ENCODE measurements at regions of chr14 and their contacts with region 1.

Region 1: GRCh38 chr14:24215495-24216344 is at the start of gene MDP1:
- DNase-seq: peak; percentile 81 to 96
- ATAC-seq: peak; percentile 74 to 86 (median 74)
- H3K4me3 ChIP-seq: peak within 1 kb of the TSS; percentile 63
- H3K4me3 Mint-ChIP-seq: peak within 1 kb of the TSS; percentile 90
- H3K27ac ChIP-seq: peak within 1 kb of the TSS; percentile 82
- H3K27ac Mint-ChIP-seq: peak within 1 kb of the TSS; percentile 98 to 99
- H3K4me1 ChIP-seq: peaks cover 30% of the 10 kb centered on the region
- H3K4me1 Mint-ChIP-seq: peaks cover 48 to 50% of the 10 kb centered on the region in 2 donors
- H3K27me3 ChIP-seq: no peaks in the 10 kb centered on the region
- H3K27me3 Mint-ChIP-seq: no peaks in the 10 kb centered on the region
- CTCF ChIP-seq: peak; percentile 61
- total RNA-seq, gene MDP1: 4.0 to 6.1 (median 5.5) TPM

Region 2: DNA sequence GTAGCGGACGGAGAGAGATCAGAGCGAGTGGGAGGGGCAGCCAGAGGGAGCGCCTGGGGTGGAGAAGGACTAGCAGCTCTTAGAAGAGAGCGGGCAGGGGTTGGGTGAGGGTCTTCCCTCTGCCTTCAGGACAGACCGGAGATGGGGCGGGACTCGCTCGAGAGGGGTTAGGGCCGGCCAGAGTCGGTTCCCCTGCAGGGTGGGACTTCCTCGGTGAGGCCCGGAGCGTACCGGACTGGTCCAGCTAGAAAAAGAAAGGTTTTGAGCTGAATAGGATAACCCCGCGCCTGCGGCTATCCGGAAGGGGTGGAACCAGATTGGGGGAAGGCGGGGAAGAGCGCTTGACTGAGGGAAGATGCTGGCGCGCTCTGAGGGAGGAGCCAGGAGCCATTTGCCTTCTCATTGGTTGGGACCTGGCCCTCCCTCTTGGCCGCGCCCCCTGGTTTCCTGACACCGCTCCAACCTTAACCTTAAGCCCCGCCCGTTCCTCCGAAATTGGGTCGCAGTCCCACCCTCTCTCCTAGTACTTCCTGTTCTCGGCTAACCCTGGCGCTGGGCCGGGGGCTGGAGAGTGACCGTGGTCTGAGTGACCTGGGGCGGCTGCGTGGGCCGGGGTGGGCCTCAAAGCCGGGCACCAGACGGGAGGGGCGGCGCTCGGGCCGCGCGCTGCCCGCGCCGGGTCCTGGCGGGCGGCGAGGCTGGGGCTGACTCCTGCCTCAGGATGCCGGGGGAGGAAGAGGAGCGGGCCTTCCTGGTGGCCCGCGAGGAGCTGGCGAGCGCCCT is 68.6 kb before region 1 on chr14 and contains the start of gene RNF31:
- intact Hi-C with region 1: loop called (anchors 2 kb)
- DNase-seq: peak; percentile 95 to 99
- ATAC-seq: peak; percentile 86 to 95 (median 86)
- H3K4me3 ChIP-seq: peak within 1 kb of the TSS; percentile 91
- H3K4me3 Mint-ChIP-seq: peak within 1 kb of the TSS; percentile 97
- H3K27ac ChIP-seq: peak within 1 kb of the TSS; percentile 88
- H3K27ac Mint-ChIP-seq: peak within 1 kb of the TSS; percentile 94
- H3K4me1 ChIP-seq: peaks cover 29% of the 10 kb centered on the region
- H3K4me1 Mint-ChIP-seq: peaks cover 53 to 73% of the 10 kb centered on the region in 2 donors
- H3K27me3 ChIP-seq: no peaks in the 10 kb centered on the region
- H3K27me3 Mint-ChIP-seq: no peaks in the 10 kb centered on the region
- CTCF ChIP-seq: no peak
- total RNA-seq, gene RNF31: 96.9 to 134 (median 125) TPM

Region 3: GRCh38 chr14:24195191-24196070 is 20.3 kb before region 1 on chr14 and contains the start of gene TM9SF1:
- intact Hi-C with region 1: loop called (anchors 1 kb)
- DNase-seq: peak; percentile 92 to 95
- ATAC-seq: peak; percentile 82 to 92 (median 84)
- H3K4me3 ChIP-seq: peak within 1 kb of the TSS; percentile 92
- H3K4me3 Mint-ChIP-seq: peak within 1 kb of the TSS; percentile 85
- H3K27ac ChIP-seq: peak within 1 kb of the TSS; percentile 99
- H3K27ac Mint-ChIP-seq: peak within 1 kb of the TSS; percentile 91 to 96
- H3K4me1 ChIP-seq: peaks cover 30% of the 10 kb centered on the region
- H3K4me1 Mint-ChIP-seq: peaks cover 42 to 52% of the 10 kb centered on the region in 2 donors
- H3K27me3 ChIP-seq: no peaks in the 10 kb centered on the region
- H3K27me3 Mint-ChIP-seq: no peaks in the 10 kb centered on the region
- CTCF ChIP-seq: no peak
- total RNA-seq, gene TM9SF1: 15.2 to 32.1 (median 28.7) TPM

Region 4: GRCh38 chr14:24241829-24242443 is 26.2 kb after region 1 on chr14:
- intact Hi-C with region 1: loop called (anchors 1 kb)
- DNase-seq: peak; percentile 92 to 97
- ATAC-seq: peak; percentile 79 to 92 (median 79)
- H3K4me3 ChIP-seq: peak overlapping the region; percentile 74
- H3K4me3 Mint-ChIP-seq: peak overlapping the region; percentile 98
- H3K27ac ChIP-seq: peak overlapping the region; percentile 97
- H3K27ac Mint-ChIP-seq: peak overlapping the region; percentile 100
- H3K4me1 ChIP-seq: peaks cover 41% of the 10 kb centered on the region
- H3K4me1 Mint-ChIP-seq: peaks cover 61 to 71% of the 10 kb centered on the region in 2 donors
- H3K27me3 ChIP-seq: no peaks in the 10 kb centered on the region
- H3K27me3 Mint-ChIP-seq: no peaks in the 10 kb centered on the region
- CTCF ChIP-seq: peak; percentile 39

Region 5: DNA sequence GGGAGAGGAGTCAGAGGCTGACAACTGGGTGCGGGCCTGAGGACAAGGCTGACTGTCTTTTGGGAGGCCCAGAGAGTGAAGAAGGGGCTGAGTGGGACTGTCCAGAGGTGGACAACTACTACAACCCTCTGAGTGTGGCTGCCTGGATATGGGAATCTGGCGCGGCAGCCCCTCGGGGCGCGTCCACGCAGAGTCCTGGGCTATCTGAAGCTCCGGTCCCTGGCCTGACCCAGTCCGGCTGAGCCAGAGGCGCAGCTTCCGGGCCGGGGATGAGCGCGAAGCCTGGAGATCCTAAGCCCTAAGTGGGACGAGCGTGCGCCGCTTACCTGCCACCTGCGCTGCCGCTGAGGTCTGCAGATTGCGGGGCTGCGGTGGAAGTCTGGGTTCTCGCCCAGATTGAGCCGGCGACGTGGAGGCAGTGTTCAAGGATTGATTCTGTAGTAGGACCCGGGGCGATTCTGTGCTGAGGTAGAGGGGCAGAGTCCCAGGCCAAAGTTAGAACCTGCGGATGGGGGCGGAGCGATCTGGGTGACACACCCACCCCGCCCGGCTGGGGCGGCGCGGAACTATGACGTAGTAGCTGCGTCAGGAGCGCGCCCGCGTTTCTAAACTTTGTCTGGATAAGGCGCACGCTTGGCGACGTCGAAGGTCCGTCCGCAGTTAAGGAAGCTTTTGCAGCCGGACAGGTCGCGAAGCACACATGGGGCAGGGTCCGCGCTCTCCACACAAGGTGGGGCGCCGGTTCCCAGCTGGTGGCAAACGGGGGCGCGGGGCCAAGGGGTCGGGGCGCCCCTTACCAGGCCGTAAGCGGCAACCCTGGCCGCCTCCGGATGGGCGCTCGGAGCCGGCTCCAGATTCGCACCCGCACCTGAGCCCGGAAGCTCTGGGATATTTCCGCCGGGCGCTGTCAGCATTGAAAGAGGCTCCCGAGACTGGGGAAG is 83.8 kb after region 1 on chr14 and contains the starts of genes DHRS1 and NOP9:
- intact Hi-C with region 1: loop called (anchors 2 kb)
- DNase-seq: peak; percentile 95 to 96
- ATAC-seq: peak; percentile 79 to 89 (median 82)
- H3K4me3 ChIP-seq: peak within 1 kb of the TSS; percentile 51
- H3K4me3 Mint-ChIP-seq: peak within 1 kb of the TSS; percentile 91
- H3K27ac ChIP-seq: peak within 1 kb of the TSS; percentile 61
- H3K27ac Mint-ChIP-seq: peak within 1 kb of the TSS; percentile 91 to 92
- H3K4me1 ChIP-seq: peaks cover 25% of the 10 kb centered on the region
- H3K4me1 Mint-ChIP-seq: peaks cover 42 to 55% of the 10 kb centered on the region in 2 donors
- H3K27me3 ChIP-seq: no peaks in the 10 kb centered on the region
- H3K27me3 Mint-ChIP-seq: no peaks in the 10 kb centered on the region
- CTCF ChIP-seq: no peak
- total RNA-seq, gene DHRS1: 39.8 to 59.0 (median 43.3) TPM
- total RNA-seq, gene NOP9: 34.9 to 47.8 (median 39.2) TPM

Region 6: GRCh38 chr14:24431569-24432258 is 216.0 kb after region 1 on chr14:
- intact Hi-C with region 1: loop called (anchors 2 kb)
- DNase-seq: peak; percentile 82 to 96
- ATAC-seq: peak; percentile 53 to 72 (median 57)
- H3K4me3 ChIP-seq: peak overlapping the region; percentile 93
- H3K4me3 Mint-ChIP-seq: peak overlapping the region; percentile 84
- H3K27ac ChIP-seq: peak overlapping the region; percentile 99
- H3K27ac Mint-ChIP-seq: peak overlapping the region; percentile 87 to 97
- H3K4me1 ChIP-seq: peaks cover 36% of the 10 kb centered on the region
- H3K4me1 Mint-ChIP-seq: peaks cover 18 to 45% of the 10 kb centered on the region in 2 donors
- H3K27me3 ChIP-seq: no peaks in the 10 kb centered on the region
- H3K27me3 Mint-ChIP-seq: no peaks in the 10 kb centered on the region
- CTCF ChIP-seq: peak; percentile 81